Left colon (tissue), 2 donors: ENCODE measurements at regions of chr22 and their contacts with region 1.

Region 1: DNA sequence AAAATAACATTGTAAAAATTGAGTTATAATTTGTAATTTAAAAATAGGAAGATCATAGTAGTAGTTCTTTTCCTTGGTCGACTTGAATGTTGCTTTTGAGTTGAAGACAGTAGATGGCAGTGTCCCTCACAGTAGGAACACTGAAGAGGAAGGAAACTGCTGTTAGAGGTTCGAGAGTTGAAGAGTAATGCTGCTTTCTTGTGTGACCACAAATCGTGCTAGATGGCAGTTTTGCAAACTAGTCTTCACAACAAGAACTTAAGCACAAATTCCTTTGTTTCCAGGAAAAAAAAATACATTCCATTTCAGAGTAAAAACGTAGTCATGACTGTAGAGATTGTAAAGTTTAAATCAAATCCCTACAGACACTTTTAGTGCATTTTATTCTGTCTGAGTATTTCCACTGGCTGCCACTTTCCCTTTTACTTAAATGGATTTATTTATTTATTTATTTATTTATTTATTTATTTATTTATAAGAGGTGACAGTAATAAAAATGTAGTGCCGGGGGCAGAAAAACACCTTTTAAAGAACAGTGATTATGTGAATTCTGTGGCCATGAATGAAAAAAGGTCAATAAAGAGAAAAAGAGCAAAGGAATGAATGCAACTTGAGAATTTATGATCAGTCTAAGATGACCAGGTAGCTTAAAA is 54.6 kb downstream of the SPECC1L start:
- DNase-seq: no peak
- ATAC-seq: peak; percentile 89

Region 2: GRCh38 chr22:24525416-24526037 is 200.3 kb after region 1 on chr22:
- intact Hi-C with region 1: loop called in 1 of 2 experiments (anchors 10 kb)
- DNase-seq: peak; percentile 68 to 89
- ATAC-seq: peak; percentile 82